Left cardiac atrium (tissue), 4 donors: ENCODE measurements at regions of chr14 and their contacts with region 1.

Region 1: DNA sequence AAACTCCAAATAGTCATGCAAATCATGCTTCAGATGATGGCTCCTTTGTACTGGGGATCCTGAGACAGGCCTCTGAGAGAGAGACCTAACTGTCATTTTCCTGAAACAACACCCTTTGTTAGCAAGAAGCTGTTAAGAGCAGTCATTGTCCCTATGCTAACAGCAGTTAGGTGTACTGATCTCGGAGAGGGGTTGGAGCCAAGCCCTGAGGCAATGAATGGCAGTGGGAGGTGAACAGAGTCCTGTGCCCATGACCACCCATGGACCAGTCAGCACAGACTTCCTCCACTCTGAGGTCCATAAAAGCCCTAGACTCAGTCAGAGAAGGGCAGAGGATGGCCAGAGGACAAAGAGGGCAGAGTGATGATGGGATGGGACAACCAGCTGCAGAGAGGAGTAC is 747.6 kb upstream of the LRFN5 start:
- DNase-seq: no peak
- ATAC-seq: no peak

Region 2: GRCh38 chr14:40093800-40094199 is 765.3 kb before region 1 on chr14:
- intact Hi-C with region 1: no loop called
- DNase-seq: no peak
- ATAC-seq: no peak

Region 3: DNA sequence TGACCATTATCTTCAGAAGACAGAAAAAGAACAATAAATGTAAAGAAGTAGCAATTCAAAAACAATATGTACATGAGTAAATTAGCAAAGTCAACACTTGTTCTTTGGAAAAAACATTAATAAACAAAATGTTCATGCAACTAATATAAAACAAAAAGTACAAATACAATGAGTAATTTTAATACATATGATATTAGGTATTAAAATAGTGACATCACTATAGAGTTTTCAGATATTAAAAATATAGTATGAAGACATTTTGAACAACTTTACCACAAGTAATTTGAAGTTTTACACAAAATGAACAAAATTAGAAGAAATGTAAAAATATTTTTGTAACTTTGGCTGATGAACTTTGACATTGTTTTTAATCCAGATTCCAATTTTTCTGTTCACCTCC is 19.4 kb after region 1 on chr14:
- intact Hi-C with region 1: loop called in 1 of 2 experiments (anchors 1 kb)
- DNase-seq: no peak
- ATAC-seq: no peak

Region 4: GRCh38 chr14:40983574-40983973 is 124.5 kb after region 1 on chr14:
- intact Hi-C with region 1: no loop called
- DNase-seq: no peak
- ATAC-seq: no peak